A549 (cell line): ENCODE measurements at regions of chr15 and their contacts with region 1.

Region 1: GRCh38 chr15:57306161-57306943 is 70.0 kb upstream of the CGNL1 start:
- DNase-seq: peak; percentile 77 to 96
- ATAC-seq: peak; percentile 88 to 96
- H3K4me3 ChIP-seq: peak overlapping the region; percentile 48
- H3K27ac ChIP-seq: peak overlapping the region; percentile 73 to 87
- H3K4me1 ChIP-seq: peaks cover 16% of the 10 kb centered on the region
- CTCF ChIP-seq: peak; percentile 96
- EP300 ChIP-seq: no peak
- POLR2A ChIP-seq: no peak
- RAD21 ChIP-seq: peak; percentile 88 to 96

Region 2: GRCh38 chr15:56491110-56491722 is 815.1 kb before region 1 on chr15:
- CTCF ChIA-PET with region 1: interaction called, 55 read pairs
- POLR2A ChIA-PET with region 1: no interaction called
- DNase-seq: peak; percentile 84 to 89
- ATAC-seq: peak; percentile 83 to 93
- H3K4me3 ChIP-seq: no peak overlapping the region
- H3K27ac ChIP-seq: no peak overlapping the region
- H3K4me1 ChIP-seq: 0 out of 3 replicates have a peak, but pooled peaks cover 3% of the 10 kb centered on the region
- CTCF ChIP-seq: peak; percentile 93
- EP300 ChIP-seq: no peak
- POLR2A ChIP-seq: no peak
- RAD21 ChIP-seq: peak; percentile 77 to 83

Region 3: DNA sequence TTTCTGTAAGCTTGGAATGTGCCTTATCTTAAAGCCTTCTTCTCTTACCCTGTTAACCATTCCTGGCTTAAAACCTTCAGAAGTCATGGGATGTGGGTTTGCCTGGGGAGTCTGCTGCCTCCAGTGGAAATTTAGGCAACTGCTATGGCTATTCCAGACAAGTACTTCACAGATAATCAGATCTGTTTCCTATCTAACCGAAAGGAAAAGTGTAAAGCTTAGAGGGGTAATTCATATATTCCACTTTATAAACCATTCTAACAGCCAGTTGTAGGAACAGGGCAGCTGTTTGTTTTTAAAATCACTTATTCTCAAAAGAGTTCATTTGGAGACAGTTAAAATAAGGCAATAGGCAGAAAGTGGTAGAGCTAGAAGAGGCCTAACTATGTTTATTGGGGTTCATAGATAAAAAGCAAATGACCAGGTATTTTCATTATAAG is 168.0 kb before region 1 on chr15:
- CTCF ChIA-PET with region 1: interaction called, 10 read pairs
- POLR2A ChIA-PET with region 1: no interaction called
- DNase-seq: peak; percentile 63 to 79
- ATAC-seq: peak; percentile 99
- H3K4me3 ChIP-seq: no peak overlapping the region
- H3K27ac ChIP-seq: no peak overlapping the region
- H3K4me1 ChIP-seq: peaks cover 9% of the 10 kb centered on the region; the same call in 1 of the 3 replicates
- CTCF ChIP-seq: peak; percentile 76
- EP300 ChIP-seq: no peak
- POLR2A ChIP-seq: no peak
- RAD21 ChIP-seq: peak; percentile 69 to 76

Region 4: GRCh38 chr15:57158589-57158988 is 147.8 kb before region 1 on chr15:
- CTCF ChIA-PET with region 1: interaction called, 25 read pairs
- POLR2A ChIA-PET with region 1: no interaction called
- DNase-seq: peak in 1 of 2 experiments; percentile 13
- ATAC-seq: peak; percentile 80 to 81; a peak in 4 of 6 replicates
- H3K4me3 ChIP-seq: no peak overlapping the region
- H3K27ac ChIP-seq: no peak overlapping the region
- H3K4me1 ChIP-seq: peaks cover 25% of the 10 kb centered on the region
- CTCF ChIP-seq: no peak
- EP300 ChIP-seq: no peak
- POLR2A ChIP-seq: no peak
- RAD21 ChIP-seq: no peak

Region 5: DNA sequence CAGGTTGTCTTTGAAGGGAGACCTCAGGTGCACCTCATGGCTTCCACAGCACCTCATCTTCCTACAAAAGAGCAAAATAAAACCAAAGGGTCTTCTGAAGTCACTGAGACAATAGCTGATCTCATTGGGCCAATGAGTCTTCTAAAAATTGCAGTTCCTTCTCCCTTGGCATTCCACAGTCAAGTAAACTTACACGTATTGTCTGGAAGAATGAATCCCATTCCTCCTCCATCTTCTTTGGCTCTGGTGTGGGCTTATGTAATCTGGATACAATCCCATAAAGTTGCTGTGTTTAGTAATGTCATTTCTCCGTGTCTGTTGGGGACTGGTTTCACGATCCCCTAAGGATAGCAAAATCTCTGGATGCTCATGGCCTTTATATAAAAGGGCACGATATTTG is 15.5 kb before region 1 on chr15:
- CTCF ChIA-PET with region 1: interaction called, 49 read pairs
- POLR2A ChIA-PET with region 1: no interaction called
- DNase-seq: no peak
- ATAC-seq: no peak
- H3K4me3 ChIP-seq: no peak overlapping the region
- H3K27ac ChIP-seq: no peak overlapping the region
- H3K4me1 ChIP-seq: no peaks in the 10 kb centered on the region
- CTCF ChIP-seq: no peak
- EP300 ChIP-seq: no peak
- POLR2A ChIP-seq: no peak
- RAD21 ChIP-seq: no peak

Region 6: DNA sequence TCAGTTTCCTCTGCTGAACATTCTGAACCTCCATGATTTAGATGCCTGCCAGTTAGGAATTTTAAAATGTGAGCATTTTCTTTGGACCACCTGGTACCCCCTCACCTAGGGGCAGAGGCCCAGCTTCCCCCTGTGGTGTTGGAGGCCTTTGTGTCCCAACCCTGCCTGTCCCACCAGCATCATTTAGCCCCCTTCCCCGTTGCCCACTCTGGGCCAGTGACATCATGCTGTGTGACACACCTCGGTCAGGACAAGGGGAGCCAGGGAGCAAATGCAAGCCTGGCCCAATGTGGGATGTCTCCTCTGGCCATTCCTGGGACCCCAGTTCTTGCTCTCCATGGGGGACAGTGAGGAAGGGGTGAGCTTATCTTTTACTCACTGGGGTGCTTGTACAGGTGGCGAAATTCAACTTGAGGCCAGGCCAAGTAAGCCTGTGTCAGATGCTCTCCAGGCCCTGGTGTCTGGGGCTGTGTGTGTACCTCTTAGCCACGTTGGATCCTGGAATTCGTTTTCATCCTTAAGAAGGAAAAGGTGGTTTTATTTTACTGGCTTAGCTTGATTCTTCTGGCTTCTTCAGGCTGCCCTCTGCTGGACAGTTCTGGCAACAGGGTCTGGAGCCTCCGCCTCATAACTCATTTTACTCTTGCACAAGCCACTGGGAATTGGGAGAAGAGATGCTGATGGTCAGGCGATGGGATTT is 235.6 kb after region 1 on chr15:
- CTCF ChIA-PET with region 1: interaction called, 12 read pairs
- POLR2A ChIA-PET with region 1: no interaction called
- DNase-seq: peak; percentile 74 to 77
- ATAC-seq: peak; percentile 68 to 88
- H3K4me3 ChIP-seq: no peak overlapping the region
- H3K27ac ChIP-seq: no peak overlapping the region
- H3K4me1 ChIP-seq: peaks cover 4% of the 10 kb centered on the region; the same call in 2 of the 3 replicates
- CTCF ChIP-seq: peak; percentile 90
- EP300 ChIP-seq: no peak
- POLR2A ChIP-seq: no peak
- RAD21 ChIP-seq: peak; percentile 75 to 84